WTC11 (cell line): ENCODE measurements at regions of chr15 and their contacts with region 1.

Region 1: DNA sequence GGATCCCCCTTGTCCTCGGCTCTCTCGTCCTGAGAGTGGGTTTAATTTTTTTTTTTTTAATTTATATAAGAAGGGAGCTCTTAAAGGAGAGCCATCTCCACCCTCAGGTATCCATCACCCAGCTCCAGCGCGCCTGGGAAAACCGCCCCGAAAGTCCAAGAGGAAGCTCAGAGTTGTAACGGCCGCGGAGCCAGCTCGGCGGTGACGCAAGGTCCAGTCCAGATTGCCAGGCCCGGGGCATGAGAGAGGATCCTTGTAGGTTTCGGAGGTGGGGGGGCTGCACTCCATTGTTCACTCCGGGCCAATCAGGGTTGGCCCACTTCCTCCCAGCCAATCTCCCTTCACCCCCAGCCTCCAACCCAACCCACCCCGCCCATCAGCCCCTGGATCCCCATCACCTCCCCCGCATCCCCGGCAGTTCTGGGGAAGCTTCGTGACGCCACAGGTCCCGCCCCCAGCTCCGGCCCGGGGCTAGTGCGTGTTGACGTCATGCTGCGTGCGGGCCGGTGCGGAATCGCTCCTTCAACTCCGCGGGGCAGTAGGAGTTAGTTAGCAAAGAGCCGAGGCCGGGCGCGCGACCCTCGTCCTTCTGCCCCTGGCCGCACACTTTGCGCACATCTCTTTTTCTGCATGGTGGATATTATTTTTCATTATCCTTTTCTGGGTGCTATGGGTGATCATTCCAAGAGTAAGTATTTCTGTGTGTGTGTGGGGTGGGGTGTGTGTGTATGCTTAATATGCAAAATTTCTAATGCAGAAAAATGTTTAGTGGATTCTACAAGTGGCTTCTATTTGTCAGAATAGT is at the start of gene ISL2:
- DNase-seq: peak; percentile 97
- ATAC-seq: peak; percentile 61
- H3K4me3 Mint-ChIP-seq: peak within 1 kb of the TSS; percentile 73
- H3K27ac Mint-ChIP-seq: peak within 1 kb of the TSS; percentile 66; the same call in 1 of the 2 replicates
- H3K4me1 Mint-ChIP-seq: peaks cover 46% of the 10 kb centered on the region
- H3K27me3 Mint-ChIP-seq: peaks cover 94% of the 10 kb centered on the region
- CTCF ChIP-seq: no peak
- total RNA-seq, gene ISL2: 0.18 to 0.37 TPM (median 0.24 TPM) in 3 replicates

Region 2: DNA sequence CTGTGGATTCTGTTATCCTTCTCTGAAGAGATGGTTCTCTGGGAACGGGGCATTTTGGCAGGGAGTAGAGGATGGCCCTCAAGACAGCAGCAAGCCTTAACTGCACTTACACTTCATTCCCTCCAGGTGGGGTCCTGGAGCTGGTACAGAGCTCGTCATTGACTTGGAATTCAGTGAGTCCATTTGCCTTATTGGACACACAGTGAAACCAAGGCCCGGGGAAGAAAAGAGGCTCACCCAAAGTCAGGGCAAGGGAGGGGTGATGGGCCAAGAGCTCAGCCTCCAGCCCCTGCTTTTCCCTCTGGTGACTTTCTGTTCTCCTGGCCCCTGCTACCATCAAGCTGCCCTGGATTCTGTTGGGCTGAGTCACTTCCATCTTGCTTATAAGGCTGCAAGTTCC is 150.7 kb before region 1 on chr15:
- CTCF ChIA-PET with region 1: interaction called, 22 read pairs
- POLR2A ChIA-PET with region 1: interaction called, 4 read pairs
- DNase-seq: peak; percentile 55
- ATAC-seq: peak; percentile 90
- H3K4me3 Mint-ChIP-seq: no peak overlapping the region
- H3K27ac Mint-ChIP-seq: no peak overlapping the region
- H3K4me1 Mint-ChIP-seq: peaks cover 8% of the 10 kb centered on the region
- H3K27me3 Mint-ChIP-seq: peaks cover 11% of the 10 kb centered on the region
- CTCF ChIP-seq: peak; percentile 71

Region 3: GRCh38 chr15:76190834-76191538 is 145.5 kb before region 1 on chr15:
- CTCF ChIA-PET with region 1: interaction called, 22 read pairs
- POLR2A ChIA-PET with region 1: interaction called, 4 read pairs
- DNase-seq: peak; percentile 90
- ATAC-seq: peak; percentile 90
- H3K4me3 Mint-ChIP-seq: 0 out of 2 replicates have a peak overlapping the region, but pooled peaks have one; percentile 5
- H3K27ac Mint-ChIP-seq: no peak overlapping the region
- H3K4me1 Mint-ChIP-seq: peaks cover 13% of the 10 kb centered on the region
- H3K27me3 Mint-ChIP-seq: peaks cover 14% of the 10 kb centered on the region
- CTCF ChIP-seq: peak; percentile 68

Region 4: GRCh38 chr15:76196269-76197231 is 139.9 kb before region 1 on chr15:
- CTCF ChIA-PET with region 1: interaction called, 17 read pairs
- POLR2A ChIA-PET with region 1: interaction called, 11 read pairs
- DNase-seq: no peak
- ATAC-seq: peak; percentile 14
- H3K4me3 Mint-ChIP-seq: no peak overlapping the region
- H3K27ac Mint-ChIP-seq: no peak overlapping the region
- H3K4me1 Mint-ChIP-seq: peaks cover 22% of the 10 kb centered on the region
- H3K27me3 Mint-ChIP-seq: no peaks in the 10 kb centered on the region
- CTCF ChIP-seq: no peak

Region 5: GRCh38 chr15:76235186-76235826 is 101.2 kb before region 1 on chr15:
- CTCF ChIA-PET with region 1: interaction called, 24 read pairs
- POLR2A ChIA-PET with region 1: no interaction called
- DNase-seq: no peak
- ATAC-seq: peak; percentile 68
- H3K4me3 Mint-ChIP-seq: no peak overlapping the region
- H3K27ac Mint-ChIP-seq: no peak overlapping the region
- H3K4me1 Mint-ChIP-seq: peaks cover 17% of the 10 kb centered on the region
- H3K27me3 Mint-ChIP-seq: no peaks in the 10 kb centered on the region
- CTCF ChIP-seq: no peak